CD4-positive, alpha-beta memory T cell (primary cell): ENCODE measurements at regions of chr1 and their contacts with region 1.

Region 1: DNA sequence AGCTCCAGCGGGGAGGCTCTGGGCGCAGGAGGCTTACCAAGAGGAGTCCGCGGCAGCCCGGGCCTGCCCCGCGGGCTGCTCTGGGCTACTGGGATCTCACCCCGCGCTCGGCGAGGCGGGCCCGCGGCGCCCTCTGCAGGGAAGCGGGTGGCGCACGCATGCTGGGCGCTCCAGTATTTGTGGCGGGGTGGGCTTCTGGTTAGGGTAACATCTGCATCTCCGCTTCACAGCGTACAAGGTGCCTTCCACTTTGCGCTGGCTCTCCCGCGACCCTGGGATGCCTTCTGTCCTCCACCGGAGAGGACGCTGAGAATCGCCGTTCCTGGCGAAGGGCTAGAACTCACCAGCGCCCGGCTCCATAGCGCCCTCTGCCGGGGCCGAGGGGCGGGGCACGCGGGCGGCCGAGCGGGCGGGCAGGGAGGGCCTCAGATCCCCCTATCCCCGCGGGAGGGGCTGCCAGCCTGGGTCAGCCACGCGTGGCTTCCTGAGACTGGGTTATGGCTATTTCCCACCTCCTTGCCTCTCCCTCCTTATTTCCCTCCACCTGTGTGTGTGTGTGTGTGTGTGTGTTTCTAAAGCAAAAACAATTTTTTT is 46.6 kb upstream of the CTBS start:
- DNase-seq: peak; percentile 72 to 90 (median 82)
- H3K4me3 ChIP-seq: peak overlapping the region; percentile 47 to 69
- H3K4me3 Mint-ChIP-seq: peak overlapping the region; percentile 89 to 96 (median 93)
- H3K27ac ChIP-seq: no peak overlapping the region
- H3K27ac Mint-ChIP-seq: peak overlapping the region in 6 of 7 donors; percentile 9 to 94 (median 84)
- H3K4me1 ChIP-seq: peaks cover 5% of the 10 kb centered on the region
- H3K4me1 Mint-ChIP-seq: peaks cover 3 to 19% (median 5%) of the 10 kb centered on the region in 4 donors
- H3K27me3 ChIP-seq: no peaks in the 10 kb centered on the region
- H3K27me3 Mint-ChIP-seq: peaks cover 0 to 6% of the 10 kb centered on the region in 2 donors

Region 2: DNA sequence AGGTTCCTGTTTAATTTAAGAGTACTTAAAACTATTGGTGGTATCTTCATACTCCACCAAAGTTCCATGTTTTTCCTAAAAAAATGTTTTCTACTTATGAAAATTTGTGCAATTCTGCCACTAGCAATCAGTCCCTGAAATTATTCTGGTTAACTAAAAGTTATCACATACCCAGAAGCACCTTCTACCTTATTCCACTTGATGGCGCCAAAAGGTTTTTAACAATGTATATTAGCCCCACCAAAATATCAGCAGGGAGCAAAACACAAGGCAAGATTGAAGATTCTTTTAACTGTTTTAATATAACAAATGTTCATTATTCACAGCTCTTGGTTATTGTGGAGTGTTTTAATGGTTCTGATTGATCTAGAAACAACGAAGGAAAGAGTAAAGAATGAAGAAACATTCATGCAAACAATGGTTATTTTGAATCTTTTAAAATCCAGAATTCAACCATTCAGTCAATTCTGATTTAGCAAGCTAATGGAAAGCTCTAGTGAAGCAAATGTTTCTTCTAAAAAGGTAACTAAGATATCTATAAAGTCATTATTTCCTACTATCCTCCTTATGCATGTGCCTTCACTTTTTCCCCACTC is 689.1 kb before region 1 on chr1:
- CTCF ChIA-PET with region 1: no interaction called
- POLR2A ChIA-PET with region 1: no interaction called
- intact Hi-C with region 1: loop called (anchors 1 kb)
- DNase-seq: peak in 4 of 5 donors; percentile 36 to 47 (median 44)
- H3K4me3 ChIP-seq: no peak overlapping the region
- H3K4me3 Mint-ChIP-seq: no peak overlapping the region
- H3K27ac ChIP-seq: no peak overlapping the region
- H3K27ac Mint-ChIP-seq: no peak overlapping the region
- H3K4me1 ChIP-seq: no peaks in the 10 kb centered on the region
- H3K4me1 Mint-ChIP-seq: no peaks in the 10 kb centered on the region
- H3K27me3 ChIP-seq: no peaks in the 10 kb centered on the region
- H3K27me3 Mint-ChIP-seq: peaks cover 4 to 5% of the 10 kb centered on the region in 2 donors

Region 3: GRCh38 chr1:84442256-84442655 is 178.6 kb before region 1 on chr1:
- CTCF ChIA-PET with region 1: interaction called, 85 read pairs
- POLR2A ChIA-PET with region 1: interaction called, 7 read pairs
- intact Hi-C with region 1: loop called (anchors 1 kb)
- DNase-seq: peak; percentile 47 to 78 (median 72)
- H3K4me3 ChIP-seq: no peak overlapping the region
- H3K4me3 Mint-ChIP-seq: peak overlapping the region in 6 of 8 donors; percentile 37 to 68 (median 48)
- H3K27ac ChIP-seq: no peak overlapping the region
- H3K27ac Mint-ChIP-seq: peak overlapping the region in 6 of 7 donors; percentile 10 to 87 (median 62)
- H3K4me1 ChIP-seq: peaks cover 15% of the 10 kb centered on the region
- H3K4me1 Mint-ChIP-seq: peaks cover 12 to 22% (median 17%) of the 10 kb centered on the region in 4 donors
- H3K27me3 ChIP-seq: no peaks in the 10 kb centered on the region
- H3K27me3 Mint-ChIP-seq: peaks cover 4 to 9% of the 10 kb centered on the region in 2 donors

Region 4: DNA sequence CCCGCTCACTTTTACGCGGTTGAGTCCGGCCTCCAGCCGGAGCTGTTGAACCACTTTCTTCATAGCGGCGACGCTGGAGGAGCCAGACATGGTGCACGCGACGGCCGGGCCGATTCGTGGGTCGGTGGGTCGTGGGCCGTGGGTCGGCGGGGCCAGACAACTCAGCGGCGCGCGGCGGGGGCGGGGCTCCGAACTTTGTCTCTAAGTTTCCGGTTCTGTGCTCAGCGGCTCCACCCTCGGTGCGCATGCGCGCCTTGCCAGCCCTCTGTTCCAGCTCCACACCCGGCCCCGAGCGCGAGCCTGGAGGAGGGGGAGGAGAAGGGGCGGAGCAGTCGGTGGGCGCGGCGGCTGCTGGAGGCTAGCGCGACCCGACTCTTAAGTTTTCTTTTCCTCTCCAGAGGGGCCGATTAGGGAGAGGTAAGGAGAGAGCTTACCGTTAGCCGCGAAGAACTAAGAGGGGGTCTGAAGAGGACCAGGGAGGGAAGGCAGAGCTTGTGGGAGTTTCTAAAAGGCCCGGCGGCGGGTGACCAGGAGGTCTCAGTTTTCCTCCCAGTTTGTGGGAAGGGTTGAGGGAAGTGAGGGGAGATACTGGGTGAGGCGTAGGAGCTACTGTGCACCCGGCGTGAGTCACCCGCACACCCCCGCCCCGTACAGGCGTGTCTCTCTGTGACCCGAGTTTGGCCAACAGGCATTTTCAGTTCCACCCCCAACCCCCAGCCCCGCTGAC is 114.7 kb before region 1 on chr1 and contains the starts of genes GNG5 and SPATA1:
- CTCF ChIA-PET with region 1: interaction called, 9 read pairs
- POLR2A ChIA-PET with region 1: no interaction called
- intact Hi-C with region 1: loop called (anchors 1 kb)
- DNase-seq: peak; percentile 94 to 97 (median 96)
- H3K4me3 ChIP-seq: peak within 1 kb of the TSS; percentile 68 to 87
- H3K4me3 Mint-ChIP-seq: peak within 1 kb of the TSS; percentile 92 to 99 (median 98)
- H3K27ac ChIP-seq: peak within 1 kb of the TSS; percentile 81
- H3K27ac Mint-ChIP-seq: peak within 1 kb of the TSS; percentile 93 to 99 (median 97)
- H3K4me1 ChIP-seq: peaks cover 47% of the 10 kb centered on the region
- H3K4me1 Mint-ChIP-seq: peaks cover 28 to 55% (median 34%) of the 10 kb centered on the region in 4 donors
- H3K27me3 ChIP-seq: no peaks in the 10 kb centered on the region
- H3K27me3 Mint-ChIP-seq: no peaks in the 10 kb centered on the region
- total RNA-seq, gene GNG5: 38.1 to 45.5 TPM
- total RNA-seq, gene SPATA1: 1.7 to 3.4 TPM

Region 5: DNA sequence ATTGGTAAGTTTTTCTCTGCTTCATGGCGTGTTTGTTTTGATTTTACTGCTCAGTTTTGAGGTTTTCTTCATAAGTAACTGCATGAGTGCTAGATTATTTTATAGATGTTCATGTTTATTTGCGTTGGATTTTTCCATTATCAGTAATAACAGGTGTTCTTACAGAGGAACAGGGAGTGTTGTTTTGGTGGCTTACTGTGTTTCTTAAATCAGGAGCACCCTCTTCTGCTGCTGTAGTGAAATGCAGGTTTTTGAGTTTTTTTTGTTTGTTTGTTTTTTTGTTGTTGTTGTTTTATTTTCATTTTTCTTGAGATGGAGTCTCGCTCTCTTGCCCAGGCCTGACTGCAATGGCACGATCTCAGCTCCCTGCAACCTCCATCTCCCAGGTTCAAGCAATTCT is 79.1 kb before region 1 on chr1:
- CTCF ChIA-PET with region 1: no interaction called
- POLR2A ChIA-PET with region 1: no interaction called
- intact Hi-C with region 1: no loop called
- DNase-seq: no peak
- H3K4me3 ChIP-seq: no peak overlapping the region
- H3K4me3 Mint-ChIP-seq: no peak overlapping the region
- H3K27ac ChIP-seq: no peak overlapping the region
- H3K27ac Mint-ChIP-seq: no peak overlapping the region
- H3K4me1 ChIP-seq: no peaks in the 10 kb centered on the region
- H3K4me1 Mint-ChIP-seq: peaks cover 0 to 7% (median 3%) of the 10 kb centered on the region in 4 donors
- H3K27me3 ChIP-seq: no peaks in the 10 kb centered on the region
- H3K27me3 Mint-ChIP-seq: no peaks in the 10 kb centered on the region

Region 6: GRCh38 chr1:84606977-84607376 is 13.8 kb before region 1 on chr1:
- CTCF ChIA-PET with region 1: interaction called, 13 read pairs
- POLR2A ChIA-PET with region 1: no interaction called
- intact Hi-C with region 1: no loop called
- DNase-seq: no peak
- H3K4me3 ChIP-seq: no peak overlapping the region
- H3K4me3 Mint-ChIP-seq: no peak overlapping the region
- H3K27ac ChIP-seq: no peak overlapping the region
- H3K27ac Mint-ChIP-seq: no peak overlapping the region
- H3K4me1 ChIP-seq: no peaks in the 10 kb centered on the region
- H3K4me1 Mint-ChIP-seq: peaks cover 0 to 4% (median 1%) of the 10 kb centered on the region in 4 donors
- H3K27me3 ChIP-seq: no peaks in the 10 kb centered on the region
- H3K27me3 Mint-ChIP-seq: peaks cover 0 to 3% of the 10 kb centered on the region in 2 donors

Region 7: DNA sequence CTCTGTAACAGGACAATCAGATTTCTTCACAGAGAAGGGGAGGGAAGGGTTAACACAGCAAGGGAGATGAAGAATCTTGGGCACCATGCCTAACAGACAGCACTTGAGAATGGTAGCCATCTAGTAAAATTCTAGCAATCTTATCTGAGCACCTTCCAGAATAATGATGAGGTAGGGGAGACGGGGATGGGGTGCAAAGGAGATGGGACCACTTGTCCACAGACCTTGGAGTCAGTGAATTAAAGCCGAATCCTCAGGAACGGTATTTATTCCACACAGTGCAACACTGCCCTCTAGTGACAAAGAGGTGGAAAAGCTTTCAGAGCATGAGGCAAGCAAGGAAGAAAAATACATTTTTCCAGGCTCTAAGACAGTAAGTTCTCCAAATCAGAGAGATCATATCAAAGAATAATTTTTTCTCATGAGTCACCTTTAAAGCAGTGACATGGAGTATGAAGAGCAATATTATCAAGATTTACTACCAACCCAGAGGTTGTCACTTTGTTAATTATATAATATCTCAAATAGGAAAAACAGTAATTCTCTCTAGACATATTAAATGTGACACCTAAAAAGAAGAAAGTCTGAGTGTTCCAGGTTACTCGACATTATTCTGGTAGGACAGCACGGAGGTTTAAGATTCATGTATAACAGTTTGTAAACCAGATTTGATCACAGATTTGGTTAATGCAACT is 315.4 kb after region 1 on chr1:
- CTCF ChIA-PET with region 1: no interaction called
- POLR2A ChIA-PET with region 1: no interaction called
- intact Hi-C with region 1: loop called (anchors 2 kb)
- DNase-seq: peak in 4 of 5 donors; percentile 52 to 62 (median 60)
- H3K4me3 ChIP-seq: no peak overlapping the region
- H3K4me3 Mint-ChIP-seq: no peak overlapping the region
- H3K27ac ChIP-seq: no peak overlapping the region
- H3K27ac Mint-ChIP-seq: no peak overlapping the region
- H3K4me1 ChIP-seq: peaks cover 3% of the 10 kb centered on the region
- H3K4me1 Mint-ChIP-seq: peaks cover 0 to 5% (median 2%) of the 10 kb centered on the region in 4 donors
- H3K27me3 ChIP-seq: no peaks in the 10 kb centered on the region
- H3K27me3 Mint-ChIP-seq: no peaks in the 10 kb centered on the region